Activated B cell treated with CpG ODN at 0.5 μM for 24 hours (primary cell): ENCODE measurements at regions of chr12 and their contacts with region 1.

Region 1: DNA sequence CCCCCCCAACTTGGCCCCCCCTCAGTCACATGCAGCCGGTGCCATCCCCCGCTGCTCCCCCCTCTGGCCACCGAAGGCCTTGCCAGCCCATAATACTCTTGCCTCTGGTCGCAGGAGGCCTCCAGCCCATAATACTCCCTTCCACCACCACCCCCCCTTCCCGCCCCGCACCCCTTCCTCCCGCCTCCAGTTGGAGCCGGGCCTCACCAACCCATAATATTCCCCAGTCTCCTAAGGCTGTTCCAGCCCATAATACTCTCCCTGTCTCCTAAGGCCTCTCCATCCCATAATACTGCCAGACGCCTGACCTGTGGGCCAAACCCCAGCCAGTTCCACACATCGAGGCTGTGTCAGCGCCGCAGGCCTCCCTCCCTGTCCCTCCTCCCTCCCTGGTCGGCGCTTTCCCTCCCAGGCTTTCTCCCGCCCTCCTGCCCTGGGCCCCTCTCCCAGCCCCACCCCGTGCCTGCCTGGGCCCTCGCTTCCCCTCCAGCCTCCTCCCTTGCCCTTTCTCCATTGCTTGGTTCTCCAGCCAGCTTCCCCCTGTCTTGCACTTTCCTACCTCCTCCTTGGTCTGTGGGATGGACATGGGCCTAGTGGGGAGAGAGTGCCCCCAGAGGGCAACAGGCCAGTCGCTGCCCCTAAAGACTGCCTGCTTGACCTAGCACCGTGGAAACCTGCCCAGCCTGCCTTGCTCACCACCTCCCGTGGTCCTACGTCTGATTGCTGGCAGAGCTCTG is 6.8 kb upstream of the CHD4 start:
- DNase-seq: peak; percentile 28
- ATAC-seq: peak; percentile 36
- H3K4me3 Mint-ChIP-seq: no peak overlapping the region
- H3K27ac Mint-ChIP-seq: peak overlapping the region; percentile 88
- H3K4me1 Mint-ChIP-seq: peaks cover 75% of the 10 kb centered on the region
- H3K27me3 Mint-ChIP-seq: no peaks in the 10 kb centered on the region
- CTCF ChIP-seq: no peak

Region 2: DNA sequence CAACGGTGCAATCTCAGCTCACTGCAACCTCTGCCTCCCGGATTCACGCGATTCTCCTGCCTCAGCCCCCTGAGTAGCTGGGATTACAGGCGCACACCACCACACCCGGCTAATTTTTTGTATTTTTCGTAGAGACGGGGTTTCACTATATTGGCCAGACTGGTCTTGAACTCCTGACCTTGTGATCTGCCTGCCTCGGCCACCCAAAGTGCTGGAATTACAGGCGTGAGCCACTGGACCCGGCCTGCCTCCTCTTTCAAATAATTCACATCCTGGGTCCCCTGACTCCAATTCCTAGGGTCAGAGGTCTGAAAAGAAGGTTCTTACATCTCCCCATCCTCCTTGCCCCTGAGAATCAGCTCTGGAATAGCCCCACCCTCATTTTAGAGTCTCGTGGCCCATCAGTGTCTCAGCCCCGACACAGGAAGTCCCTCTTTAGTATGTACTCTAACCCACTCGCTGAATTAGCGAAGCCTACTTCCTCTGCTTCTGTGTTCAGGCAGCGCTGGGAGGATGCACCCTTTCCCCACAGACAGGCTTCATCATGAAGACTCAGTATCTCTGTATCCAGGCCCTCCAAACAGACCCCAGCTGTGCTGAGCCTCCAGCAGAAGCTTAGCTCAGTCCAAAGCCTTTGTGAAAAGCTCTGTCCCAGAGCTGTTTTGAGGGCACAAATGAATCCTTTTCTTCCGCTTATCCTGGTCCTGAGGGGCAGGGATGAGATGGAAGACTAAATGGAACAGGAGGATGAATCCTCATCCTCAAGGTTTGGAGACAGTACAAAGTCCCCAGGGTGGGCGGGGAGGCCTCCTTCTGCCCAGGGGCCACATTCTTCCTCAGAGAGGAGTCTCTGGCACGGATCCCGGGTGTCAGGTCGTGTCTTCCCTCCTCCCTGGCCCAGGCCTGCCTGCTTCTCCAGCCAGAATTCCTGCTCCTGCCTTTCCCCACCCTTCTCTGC is 18.4 kb after region 1 on chr12:
- CTCF ChIA-PET with region 1: interaction called, 13 read pairs
- POLR2A ChIA-PET with region 1: interaction called, 126 read pairs
- intact Hi-C with region 1: loop called (anchors 1 kb)
- DNase-seq: peak; percentile 51
- ATAC-seq: peak; percentile 53
- H3K4me3 Mint-ChIP-seq: peak overlapping the region; percentile 86
- H3K27ac Mint-ChIP-seq: peak overlapping the region; percentile 98
- H3K4me1 Mint-ChIP-seq: peaks cover 84% of the 10 kb centered on the region
- H3K27me3 Mint-ChIP-seq: no peaks in the 10 kb centered on the region
- CTCF ChIP-seq: no peak

Region 3: GRCh38 chr12:6662906-6663742 is 49.2 kb after region 1 on chr12 and contains the start of gene ING4:
- CTCF ChIA-PET with region 1: interaction called, 3 read pairs
- POLR2A ChIA-PET with region 1: interaction called, 8 read pairs
- intact Hi-C with region 1: loop called (anchors 1 kb)
- DNase-seq: peak; percentile 80
- ATAC-seq: peak; percentile 97
- H3K4me3 Mint-ChIP-seq: peak within 1 kb of the TSS; percentile 97
- H3K27ac Mint-ChIP-seq: peak within 1 kb of the TSS; percentile 95
- H3K4me1 Mint-ChIP-seq: peaks cover 27% of the 10 kb centered on the region
- H3K27me3 Mint-ChIP-seq: no peaks in the 10 kb centered on the region
- CTCF ChIP-seq: no peak
- total RNA-seq, gene ING4: 31.6 and 39.2 TPM in 2 replicates

Region 4: GRCh38 chr12:6764011-6764828 is 150.3 kb after region 1 on chr12:
- CTCF ChIA-PET with region 1: no interaction called
- POLR2A ChIA-PET with region 1: interaction called, 4 read pairs
- intact Hi-C with region 1: loop called (anchors 1 kb)
- DNase-seq: peak; percentile 26
- ATAC-seq: peak; percentile 83
- H3K4me3 Mint-ChIP-seq: peak overlapping the region; percentile 55
- H3K27ac Mint-ChIP-seq: no peak overlapping the region
- H3K4me1 Mint-ChIP-seq: peaks cover 29% of the 10 kb centered on the region
- H3K27me3 Mint-ChIP-seq: peaks cover 31% of the 10 kb centered on the region
- CTCF ChIP-seq: no peak

Region 5: DNA sequence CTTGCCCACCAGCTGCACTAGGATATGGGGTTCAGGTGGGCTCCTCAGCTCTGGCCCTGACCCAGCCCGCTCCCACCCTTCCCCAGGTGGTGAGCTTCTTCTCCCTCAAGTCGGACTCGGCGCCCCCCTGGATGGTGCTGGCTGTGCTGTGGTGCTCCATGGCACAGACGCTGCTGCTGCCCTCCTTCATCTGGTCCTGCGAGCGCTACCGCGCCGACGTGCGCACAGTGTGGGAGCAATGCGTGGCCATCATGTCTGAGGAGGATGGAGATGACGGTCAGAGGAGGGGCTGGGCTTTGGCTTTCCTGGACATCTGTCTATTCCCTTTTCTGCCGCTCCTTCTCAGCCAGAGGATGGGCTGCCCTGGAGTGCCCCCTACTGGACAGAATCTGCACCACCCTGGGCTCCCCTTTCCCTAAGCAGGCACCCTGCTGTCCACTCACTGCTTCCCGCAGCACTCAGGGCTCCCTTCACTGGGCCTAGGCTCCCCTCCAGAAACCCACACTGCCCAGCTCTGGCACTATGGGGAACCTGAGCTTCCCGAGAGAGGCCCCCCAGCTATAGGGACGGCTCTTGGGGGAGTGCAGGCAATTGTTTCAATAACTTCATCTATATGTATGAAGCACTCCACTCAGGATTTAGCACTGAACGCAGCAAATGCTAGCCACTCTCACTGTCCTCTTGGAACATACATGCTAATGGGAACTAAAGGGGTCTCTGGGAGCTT is 211.6 kb after region 1 on chr12:
- CTCF ChIA-PET with region 1: no interaction called
- POLR2A ChIA-PET with region 1: no interaction called
- intact Hi-C with region 1: loop called (anchors 2 kb)
- DNase-seq: peak; percentile 69
- ATAC-seq: peak; percentile 62
- H3K4me3 Mint-ChIP-seq: no peak overlapping the region
- H3K27ac Mint-ChIP-seq: no peak overlapping the region
- H3K4me1 Mint-ChIP-seq: peaks cover 32% of the 10 kb centered on the region
- H3K27me3 Mint-ChIP-seq: peaks cover 73% of the 10 kb centered on the region
- CTCF ChIP-seq: peak; percentile 47

Region 6: DNA sequence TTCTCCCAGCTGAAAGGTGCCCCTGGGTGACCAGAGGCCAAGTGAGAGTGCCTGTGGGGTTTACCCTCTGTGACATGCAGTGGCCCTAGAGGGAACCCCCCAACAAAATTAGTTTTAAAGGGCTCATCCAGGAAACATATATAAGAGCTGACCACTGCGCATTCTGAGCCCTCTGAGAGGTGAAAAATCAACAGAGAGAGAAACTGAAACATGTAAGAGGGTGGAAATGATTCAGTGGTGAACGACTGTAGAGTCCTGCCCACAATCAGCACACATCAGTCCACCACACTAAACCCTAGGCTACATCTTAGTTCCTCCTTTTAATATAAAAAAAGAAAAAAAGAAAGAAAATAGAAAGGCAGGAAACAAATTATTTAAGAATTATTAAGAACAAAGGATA is 668.9 kb after region 1 on chr12:
- CTCF ChIA-PET with region 1: no interaction called
- POLR2A ChIA-PET with region 1: no interaction called
- intact Hi-C with region 1: no loop called
- DNase-seq: no peak
- ATAC-seq: no peak
- H3K4me3 Mint-ChIP-seq: no peak overlapping the region
- H3K27ac Mint-ChIP-seq: no peak overlapping the region
- H3K4me1 Mint-ChIP-seq: no peaks in the 10 kb centered on the region
- H3K27me3 Mint-ChIP-seq: peaks cover 44% of the 10 kb centered on the region
- CTCF ChIP-seq: no peak